Prostate gland (tissue), 2 donors: ENCODE measurements at regions of chr4 and their contacts with region 1.

Region 1: DNA sequence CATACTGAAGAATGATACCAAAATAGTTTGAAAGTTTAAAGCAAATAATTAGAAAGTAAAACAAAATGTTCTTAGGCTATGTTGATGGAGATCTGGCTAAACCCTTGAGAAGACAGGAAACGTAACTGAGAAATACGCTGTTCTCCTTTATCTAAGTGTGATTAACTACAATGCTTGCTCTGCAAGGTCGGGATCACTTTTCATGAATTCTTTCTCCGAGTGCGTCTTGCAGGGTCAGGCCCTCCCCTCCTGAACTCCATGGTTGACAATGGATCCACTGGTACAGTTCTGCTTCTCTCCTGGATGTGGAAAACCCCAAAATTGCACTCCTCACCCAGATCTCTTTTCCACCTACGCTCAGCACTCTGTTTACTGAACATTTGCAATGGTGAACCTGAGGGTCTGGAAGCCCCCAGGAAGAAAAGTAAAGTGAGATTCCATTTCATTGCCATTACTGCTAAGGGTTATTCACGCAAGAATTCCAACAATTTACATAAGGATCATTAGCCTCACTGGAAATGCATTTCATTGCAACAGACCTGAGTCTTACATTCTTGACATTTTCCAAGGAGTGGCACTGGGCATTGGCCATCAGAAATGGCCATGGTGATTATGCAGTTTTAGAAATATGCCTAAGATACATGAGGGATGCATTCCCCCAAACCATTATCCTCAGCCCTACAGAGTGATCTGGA is 24.6 kb upstream of the WWC2 start:
- DNase-seq: no peak
- H3K4me3 ChIP-seq: no peak overlapping the region
- H3K27ac ChIP-seq: no peak overlapping the region
- H3K4me1 ChIP-seq: no peaks in the 10 kb centered on the region
- H3K27me3 ChIP-seq: no peaks in the 10 kb centered on the region
- CTCF ChIP-seq: no peak
- POLR2A ChIP-seq: no peak

Region 2: GRCh38 chr4:182847576-182848450 is 226.6 kb before region 1 on chr4:
- intact Hi-C with region 1: no loop called
- DNase-seq: no peak
- H3K4me3 ChIP-seq: no peak overlapping the region
- H3K27ac ChIP-seq: no peak overlapping the region
- H3K4me1 ChIP-seq: no peaks in the 10 kb centered on the region
- H3K27me3 ChIP-seq: no peaks in the 10 kb centered on the region
- CTCF ChIP-seq: no peak
- POLR2A ChIP-seq: no peak

Region 3: GRCh38 chr4:182938205-182938645 is 136.2 kb before region 1 on chr4:
- intact Hi-C with region 1: loop called (anchors 5 kb)
- DNase-seq: peak; percentile 32
- H3K4me3 ChIP-seq: no peak overlapping the region
- H3K27ac ChIP-seq: no peak overlapping the region
- H3K4me1 ChIP-seq: no peaks in the 10 kb centered on the region
- H3K27me3 ChIP-seq: no peaks in the 10 kb centered on the region
- CTCF ChIP-seq: peak; percentile 30 to 79 (median 74)
- POLR2A ChIP-seq: no peak

Region 4: DNA sequence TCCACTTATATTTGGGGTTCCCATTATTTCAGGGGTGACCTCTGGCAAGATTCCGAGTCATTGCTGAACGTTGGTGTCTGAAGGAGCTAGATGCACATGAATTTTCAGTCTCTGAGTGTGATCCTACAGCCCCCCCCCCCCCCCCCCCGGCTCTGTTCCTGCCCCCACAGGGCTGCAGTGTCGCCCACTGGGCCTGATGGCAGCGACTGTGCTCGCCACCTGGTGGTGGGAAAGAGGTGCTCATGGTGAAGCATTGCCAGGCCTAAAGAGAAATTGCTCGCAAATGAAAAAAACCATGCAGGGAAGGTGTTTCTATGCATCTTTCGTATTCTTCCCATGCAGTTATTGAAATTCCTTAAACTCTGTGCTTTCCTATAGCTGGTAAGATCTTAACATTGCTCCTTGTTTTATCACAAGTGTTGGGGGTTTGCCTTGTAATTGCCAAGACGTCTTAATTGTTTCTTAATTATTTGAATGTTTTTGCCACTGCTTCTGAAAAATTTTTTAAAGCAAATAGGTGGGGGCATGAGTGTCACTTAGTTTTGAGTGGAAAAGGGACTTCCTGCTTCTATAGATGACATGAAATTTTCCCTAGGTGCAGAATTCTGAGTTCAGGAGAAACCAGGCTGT is 182.4 kb after region 1 on chr4:
- intact Hi-C with region 1: loop called (anchors 1 kb)
- DNase-seq: no peak
- H3K4me3 ChIP-seq: no peak overlapping the region
- H3K27ac ChIP-seq: peak overlapping the region in 1 of 2 donors; percentile 51
- H3K4me1 ChIP-seq: peaks cover 19% of the 10 kb centered on the region
- H3K27me3 ChIP-seq: no peaks in the 10 kb centered on the region
- CTCF ChIP-seq: peak; percentile 44 to 56 (median 50)
- POLR2A ChIP-seq: no peak

Region 5: DNA sequence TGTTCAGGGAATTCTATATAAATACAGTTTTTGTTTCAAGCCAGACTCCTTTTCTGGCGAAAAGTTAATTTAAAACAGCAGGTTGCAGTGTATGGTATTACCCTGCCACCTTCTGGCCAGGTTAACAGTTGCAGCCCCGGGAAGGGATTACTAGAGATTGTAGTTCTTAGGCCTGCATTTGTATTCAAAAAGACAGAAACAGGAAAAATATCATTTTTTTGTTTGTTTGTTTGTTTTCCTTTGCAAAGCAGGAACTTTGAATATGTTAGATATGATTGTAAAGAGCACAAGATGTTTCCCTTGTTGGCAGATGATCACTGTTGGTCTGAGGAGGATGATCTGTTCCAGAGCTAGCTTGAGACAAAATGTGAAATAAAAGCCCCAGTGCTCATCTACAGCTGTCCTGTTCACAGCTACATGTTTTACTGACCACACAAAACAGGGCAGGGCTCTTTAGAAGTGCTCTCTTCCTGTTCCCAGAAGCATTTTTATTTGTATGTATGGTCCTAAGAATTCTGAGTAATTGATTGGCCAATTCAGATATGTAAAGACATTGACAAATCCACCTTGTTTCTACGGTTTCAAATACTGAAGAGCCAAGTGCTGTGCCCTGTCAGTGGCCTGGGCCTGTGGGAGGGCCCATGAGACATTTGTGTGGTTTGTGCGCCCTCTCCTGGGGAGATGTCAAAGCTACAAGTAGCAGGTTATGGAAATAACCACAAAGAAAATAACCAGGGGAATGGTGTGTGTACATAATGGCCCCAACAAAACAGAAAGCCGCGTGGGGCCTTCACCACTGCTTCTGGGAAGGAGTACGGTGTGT is 187.7 kb after region 1 on chr4:
- intact Hi-C with region 1: loop called (anchors 1 kb)
- DNase-seq: peak; percentile 76
- H3K4me3 ChIP-seq: no peak overlapping the region
- H3K27ac ChIP-seq: peak overlapping the region; percentile 60 to 67
- H3K4me1 ChIP-seq: peaks cover 6% of the 10 kb centered on the region
- H3K27me3 ChIP-seq: no peaks in the 10 kb centered on the region
- CTCF ChIP-seq: peak; percentile 75 to 91 (median 81)
- POLR2A ChIP-seq: no peak